ENCODE measurements at regions of chr4 and their contacts with region 1.

Region 1: DNA sequence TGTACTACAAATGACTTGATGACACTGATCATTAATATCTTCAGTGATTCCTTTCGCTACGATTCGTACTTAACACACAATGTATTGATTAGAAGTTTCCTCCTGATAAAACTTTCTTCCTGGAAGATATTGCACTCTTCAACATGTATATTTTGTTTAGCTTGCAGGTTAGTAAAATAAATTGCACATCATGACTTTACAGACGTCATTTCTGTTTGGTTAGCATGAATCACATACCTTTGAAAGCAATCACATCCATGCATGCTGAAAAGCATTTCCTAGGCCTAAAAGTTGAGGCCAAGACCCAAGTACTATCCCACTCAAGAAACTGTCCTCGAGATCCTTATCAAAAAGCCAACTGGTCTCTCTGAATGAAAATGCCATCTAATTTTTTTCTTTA is 1841.0 kb upstream of the PCDH7 start:
- DNase-seq: peak; percentile 69
- ATAC-seq: peak; percentile 35; the same call in 1 of the 2 replicates
- H3K4me3 ChIP-seq: no peak overlapping the region
- H3K27ac ChIP-seq: no peak overlapping the region
- H3K4me1 ChIP-seq: no peaks in the 10 kb centered on the region; the same call in 1 of the 2 replicates
- H3K27me3 ChIP-seq: no peaks in the 10 kb centered on the region
- CTCF ChIP-seq: no peak
- POLR2A ChIP-seq: no peak
- RAD21 ChIP-seq: no peak

Region 2: DNA sequence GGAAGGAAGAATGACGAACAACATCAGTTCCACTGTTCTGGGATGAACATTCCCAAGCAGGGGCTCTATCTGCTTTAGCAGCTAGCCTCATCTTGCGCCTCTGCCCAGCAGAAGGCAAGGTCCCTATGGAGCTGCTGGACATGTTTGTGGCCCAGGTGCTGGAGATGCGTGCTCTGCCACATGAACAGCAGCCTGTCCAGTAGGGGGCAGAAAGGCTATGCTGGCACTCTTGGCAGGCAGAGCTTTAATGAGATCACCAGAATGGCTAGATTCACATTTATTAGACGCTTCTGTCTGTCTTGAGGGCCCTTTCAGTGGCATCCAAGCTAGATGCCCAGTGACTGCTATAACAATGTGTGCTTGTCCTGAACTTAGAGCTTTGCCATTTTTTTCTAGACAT is 192.6 kb before region 1 on chr4:
- CTCF ChIA-PET with region 1: no interaction called
- POLR2A ChIA-PET with region 1: no interaction called
- dilution Hi-C with region 1: no loop called
- in situ Hi-C with region 1: no loop called
- intact Hi-C with region 1: loop called (anchors 10 kb)
- DNase-seq: peak; percentile 38
- ATAC-seq: peak; percentile 46; the same call in 1 of the 2 replicates
- H3K4me3 ChIP-seq: no peak overlapping the region
- H3K27ac ChIP-seq: no peak overlapping the region
- H3K4me1 ChIP-seq: no peaks in the 10 kb centered on the region
- H3K27me3 ChIP-seq: no peaks in the 10 kb centered on the region
- CTCF ChIP-seq: peak; percentile 43
- POLR2A ChIP-seq: no peak
- RAD21 ChIP-seq: peak; percentile 59